ENCODE measurements at regions of chr5 and their contacts with region 1.

Region 1: GRCh38 chr5:100903039-100903887 is at the start of gene ST8SIA4:
- DNase-seq: peak; percentile 72 to 83
- H3K4me3 ChIP-seq: peak within 1 kb of the TSS; percentile 54
- H3K27ac ChIP-seq: no peak within 1 kb of the TSS
- H3K4me1 ChIP-seq: peaks cover 30% of the 10 kb centered on the region
- H3K27me3 ChIP-seq: peaks cover 12% of the 10 kb centered on the region; the same call in 1 of the 2 replicates
- CTCF ChIP-seq: no peak
- total RNA-seq, gene ST8SIA4: 2.1 and 2.4 TPM in 2 replicates

Region 2: DNA sequence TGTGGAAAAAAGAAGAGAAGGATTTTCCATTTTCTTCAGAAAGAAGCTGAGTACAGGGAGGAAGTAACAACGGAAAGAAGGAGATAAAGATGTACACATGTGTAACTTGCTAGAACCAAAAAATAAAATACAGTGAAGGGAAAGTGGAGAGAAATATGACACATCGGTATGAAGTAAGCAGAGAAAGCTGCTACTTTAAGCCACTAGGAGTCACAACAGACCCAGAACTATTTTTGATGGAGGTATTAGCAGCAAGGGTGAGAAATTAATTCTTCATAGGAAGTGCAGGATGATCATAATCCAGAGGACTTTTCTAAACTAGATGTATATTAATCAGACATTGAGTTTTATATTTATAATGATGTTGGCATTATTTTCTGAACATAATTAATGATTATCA is 279.5 kb before region 1 on chr5:
- CTCF ChIA-PET with region 1: no interaction called
- POLR2A ChIA-PET with region 1: no interaction called
- intact Hi-C with region 1: loop called (anchors 2 kb)
- DNase-seq: no peak
- H3K4me3 ChIP-seq: no peak overlapping the region
- H3K27ac ChIP-seq: no peak overlapping the region
- H3K4me1 ChIP-seq: no peaks in the 10 kb centered on the region
- H3K27me3 ChIP-seq: no peaks in the 10 kb centered on the region
- CTCF ChIP-seq: peak; percentile 51

Region 3: GRCh38 chr5:100697970-100698369 is 205.3 kb before region 1 on chr5:
- CTCF ChIA-PET with region 1: interaction called, 4 read pairs
- POLR2A ChIA-PET with region 1: interaction called, 11 read pairs
- intact Hi-C with region 1: no loop called
- DNase-seq: no peak
- H3K4me3 ChIP-seq: no peak overlapping the region
- H3K27ac ChIP-seq: no peak overlapping the region
- H3K4me1 ChIP-seq: no peaks in the 10 kb centered on the region
- H3K27me3 ChIP-seq: no peaks in the 10 kb centered on the region
- CTCF ChIP-seq: peak; percentile 47; the same call in 1 of the 2 replicates

Region 4: GRCh38 chr5:100777680-100778281 is 125.5 kb before region 1 on chr5:
- CTCF ChIA-PET with region 1: no interaction called
- POLR2A ChIA-PET with region 1: no interaction called
- intact Hi-C with region 1: loop called (anchors 5 kb)
- DNase-seq: peak; percentile 10 to 45
- H3K4me3 ChIP-seq: no peak overlapping the region
- H3K27ac ChIP-seq: peak overlapping the region; percentile 71
- H3K4me1 ChIP-seq: peaks cover 10% of the 10 kb centered on the region
- H3K27me3 ChIP-seq: no peaks in the 10 kb centered on the region
- CTCF ChIP-seq: no peak

Region 5: DNA sequence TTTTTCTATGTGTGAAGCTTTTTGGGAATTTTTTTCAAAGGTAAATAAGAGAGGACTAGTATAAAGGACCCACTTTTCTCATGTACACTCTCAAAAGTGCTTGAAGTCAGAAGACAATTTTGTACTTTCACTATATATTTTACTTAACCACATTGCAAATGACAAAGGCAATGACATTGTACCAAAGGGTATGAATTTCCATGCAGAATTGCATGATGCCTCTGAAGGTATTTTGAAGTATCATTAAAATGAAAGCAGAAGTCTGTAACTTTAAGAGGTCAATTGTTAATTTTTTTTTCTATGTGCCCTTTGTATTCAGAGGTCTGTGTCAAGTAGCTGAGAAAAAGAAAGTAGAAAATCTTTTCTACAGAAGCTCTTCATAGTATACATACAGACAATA is 84.9 kb before region 1 on chr5:
- CTCF ChIA-PET with region 1: no interaction called
- POLR2A ChIA-PET with region 1: no interaction called
- intact Hi-C with region 1: loop called (anchors 1 kb)
- DNase-seq: no peak
- H3K4me3 ChIP-seq: no peak overlapping the region
- H3K27ac ChIP-seq: no peak overlapping the region
- H3K4me1 ChIP-seq: peaks cover 7% of the 10 kb centered on the region
- H3K27me3 ChIP-seq: no peaks in the 10 kb centered on the region
- CTCF ChIP-seq: no peak

Region 6: DNA sequence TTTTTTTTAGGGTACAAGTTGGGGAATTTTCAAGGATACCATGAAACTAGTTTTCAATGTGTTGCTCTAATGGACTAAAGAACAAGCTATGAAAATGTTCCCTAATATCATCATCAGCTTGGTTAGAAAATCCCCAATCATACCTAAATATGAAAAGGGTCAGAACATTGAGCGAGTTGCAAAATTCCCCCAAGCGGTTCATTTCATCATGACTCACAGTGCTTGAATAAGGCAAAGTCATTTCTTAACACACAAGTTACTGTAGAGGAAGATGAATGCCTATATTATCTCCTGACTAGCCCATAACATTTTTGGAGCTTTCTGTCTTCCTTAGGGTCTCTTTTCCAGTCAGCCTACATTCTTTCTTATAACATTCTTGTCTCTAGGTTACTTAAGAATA is 62.9 kb before region 1 on chr5:
- CTCF ChIA-PET with region 1: interaction called, 3 read pairs
- POLR2A ChIA-PET with region 1: no interaction called
- intact Hi-C with region 1: loop called (anchors 2 kb)
- DNase-seq: peak in 1 of 2 experiments; percentile 46
- H3K4me3 ChIP-seq: no peak overlapping the region
- H3K27ac ChIP-seq: no peak overlapping the region
- H3K4me1 ChIP-seq: peaks cover 10% of the 10 kb centered on the region
- H3K27me3 ChIP-seq: no peaks in the 10 kb centered on the region
- CTCF ChIP-seq: no peak

Region 7: DNA sequence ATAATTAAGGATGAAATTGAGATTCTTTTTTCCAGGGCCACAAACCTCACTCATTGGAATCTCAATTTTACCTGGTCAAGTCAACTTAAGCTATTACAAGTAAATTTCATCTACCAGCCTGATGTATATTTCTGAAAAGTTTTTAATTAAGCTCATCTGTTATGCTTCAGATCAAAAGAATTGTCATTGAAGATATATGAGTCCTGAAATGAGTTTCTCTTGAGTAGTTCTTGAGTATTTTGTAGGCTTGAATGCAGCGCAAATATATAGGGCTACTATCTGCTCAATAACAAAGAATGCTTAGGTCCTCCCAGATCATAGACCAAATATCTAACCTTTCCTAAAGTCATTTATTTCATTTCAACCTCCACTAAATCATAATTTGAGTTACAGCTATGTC is 482.0 kb after region 1 on chr5:
- CTCF ChIA-PET with region 1: interaction called, 4 read pairs
- POLR2A ChIA-PET with region 1: no interaction called
- intact Hi-C with region 1: loop called (anchors 5 kb)
- DNase-seq: no peak
- H3K4me3 ChIP-seq: no peak overlapping the region
- H3K27ac ChIP-seq: no peak overlapping the region
- H3K4me1 ChIP-seq: no peaks in the 10 kb centered on the region
- H3K27me3 ChIP-seq: no peaks in the 10 kb centered on the region
- CTCF ChIP-seq: no peak